Colonic mucosa (tissue), 4 donors: ENCODE measurements at regions of chr5 and their contacts with region 1.

Region 1: GRCh38 chr5:71782771-71783770 is 64.0 kb downstream of the CARTPT start:
- DNase-seq: peak; percentile 83
- H3K4me3 ChIP-seq: no peak overlapping the region
- H3K27ac ChIP-seq: no peak overlapping the region
- H3K4me1 ChIP-seq: no peaks in the 10 kb centered on the region
- H3K27me3 ChIP-seq: no peaks in the 10 kb centered on the region
- CTCF ChIP-seq: peak; percentile 68

Region 2: GRCh38 chr5:71693828-71694427 is 89.1 kb before region 1 on chr5:
- intact Hi-C with region 1: no loop called
- DNase-seq: no peak
- H3K4me3 ChIP-seq: no peak overlapping the region
- H3K27ac ChIP-seq: no peak overlapping the region
- H3K4me1 ChIP-seq: no peaks in the 10 kb centered on the region
- H3K27me3 ChIP-seq: no peaks in the 10 kb centered on the region
- CTCF ChIP-seq: no peak

Region 3: DNA sequence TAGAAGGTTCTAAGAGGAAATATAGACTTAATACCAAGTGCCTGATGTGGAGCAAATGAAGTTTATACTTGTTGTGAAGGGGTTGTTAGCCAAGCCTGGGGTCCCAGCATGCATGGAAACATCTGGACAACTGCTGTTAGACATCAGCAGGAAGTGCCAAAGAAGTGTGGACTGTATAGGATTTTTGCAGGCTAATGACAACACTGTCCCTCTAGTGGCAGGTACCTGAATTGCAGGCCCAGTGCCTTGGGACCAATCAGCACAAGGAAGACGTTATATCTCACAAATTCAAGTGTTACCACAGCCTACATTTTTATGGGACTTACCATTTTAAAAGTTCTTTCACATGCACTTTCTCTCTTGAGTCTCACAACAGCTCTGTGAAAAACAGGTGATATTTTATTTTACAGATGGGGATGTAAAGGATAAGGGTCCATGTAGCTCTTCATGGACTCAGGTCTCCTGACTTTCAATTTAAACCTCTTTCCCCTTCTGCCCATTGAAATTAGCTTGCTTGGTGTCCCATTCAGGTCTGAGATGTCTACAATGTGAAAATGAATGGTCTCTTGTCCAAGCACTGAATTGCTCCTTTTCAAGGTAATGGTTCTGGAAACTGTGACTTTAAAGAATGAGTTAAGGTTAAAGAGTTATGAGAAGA is 235.2 kb after region 1 on chr5:
- intact Hi-C with region 1: loop called (anchors 2 kb)
- DNase-seq: peak; percentile 73
- H3K4me3 ChIP-seq: no peak overlapping the region
- H3K27ac ChIP-seq: no peak overlapping the region
- H3K4me1 ChIP-seq: no peaks in the 10 kb centered on the region
- H3K27me3 ChIP-seq: no peaks in the 10 kb centered on the region
- CTCF ChIP-seq: peak; percentile 98

Region 4: DNA sequence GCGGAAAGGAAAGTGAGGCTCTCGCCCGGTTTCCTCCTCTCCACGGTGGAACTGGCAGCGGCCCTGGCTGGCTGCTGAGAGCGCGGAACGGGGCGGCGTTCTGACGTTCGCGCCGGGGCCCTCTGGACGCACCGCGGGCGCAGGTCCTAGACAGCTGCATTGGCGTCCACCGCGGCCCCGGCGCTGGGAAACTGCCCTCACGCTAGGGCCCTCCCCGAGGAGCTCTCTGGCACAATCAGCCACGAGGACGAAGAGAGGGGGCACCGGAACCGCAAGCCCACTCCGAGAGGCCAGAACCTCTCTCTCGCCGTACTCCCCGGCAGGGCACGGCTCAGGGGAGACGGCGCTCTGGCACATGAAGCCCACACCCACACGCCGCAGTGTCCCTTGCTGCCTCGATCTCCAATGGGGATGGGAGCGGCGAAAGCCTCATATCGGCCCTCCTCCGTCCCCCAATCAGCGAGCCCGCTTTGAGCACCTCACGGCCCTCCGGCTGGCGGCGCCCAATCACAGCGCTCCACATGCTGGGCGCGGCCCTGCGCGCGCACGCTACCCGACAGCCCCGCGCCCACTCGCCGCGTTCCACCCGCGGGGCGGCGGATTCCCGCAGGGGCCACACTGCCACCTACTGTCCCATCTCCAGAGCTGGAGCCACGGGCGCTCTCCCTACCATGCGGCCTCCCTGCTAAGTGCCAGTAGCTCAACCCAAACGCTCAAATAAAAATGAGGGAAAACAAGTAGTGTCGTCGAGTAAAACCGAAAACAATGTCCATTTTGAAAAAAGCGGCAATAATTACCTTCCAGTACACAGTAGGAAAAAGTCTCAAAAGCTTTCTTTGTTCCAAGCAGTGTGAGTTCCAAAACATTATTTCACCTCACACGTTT is 525.1 kb after region 1 on chr5:
- intact Hi-C with region 1: loop called (anchors 2 kb)
- DNase-seq: peak; percentile 97
- H3K4me3 ChIP-seq: peak overlapping the region; percentile 70
- H3K27ac ChIP-seq: peak overlapping the region; percentile 93
- H3K4me1 ChIP-seq: peaks cover 7% of the 10 kb centered on the region
- H3K27me3 ChIP-seq: no peaks in the 10 kb centered on the region
- CTCF ChIP-seq: peak; percentile 92